CD8-positive, alpha-beta T cell (primary cell): ENCODE measurements at regions of chr14 and their contacts with region 1.

Region 1: DNA sequence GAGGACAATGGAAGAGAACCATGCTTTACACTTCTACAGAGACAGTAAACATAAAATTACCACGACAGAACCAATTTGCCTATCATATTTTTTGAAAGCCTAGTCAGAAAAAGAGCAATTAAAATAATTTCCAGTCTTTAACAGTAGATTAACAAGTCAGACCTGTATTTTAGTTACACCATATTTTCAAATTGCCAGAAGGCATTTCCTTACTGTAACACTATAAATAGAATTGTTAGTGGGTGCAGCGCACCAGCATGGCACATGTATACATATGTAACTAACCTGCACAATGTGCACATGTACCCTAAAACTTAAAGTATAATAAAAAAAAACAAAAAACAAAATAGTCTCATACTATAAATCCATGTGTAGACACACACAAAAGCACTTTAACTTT is 16.0 kb downstream of the SOS2 start:
- DNase-seq: no peak
- ATAC-seq: no peak
- H3K4me3 ChIP-seq: no peak overlapping the region
- H3K4me3 Mint-ChIP-seq: no peak overlapping the region
- H3K27ac ChIP-seq: no peak overlapping the region
- H3K27ac Mint-ChIP-seq: no peak overlapping the region
- H3K4me1 ChIP-seq: no peaks in the 10 kb centered on the region
- H3K4me1 Mint-ChIP-seq: peaks cover 32% of the 10 kb centered on the region
- H3K27me3 ChIP-seq: no peaks in the 10 kb centered on the region
- H3K27me3 Mint-ChIP-seq: no peaks in the 10 kb centered on the region
- CTCF ChIP-seq: no peak

Region 2: GRCh38 chr14:50897658-50898175 is 682.3 kb after region 1 on chr14:
- CTCF ChIA-PET with region 1: no interaction called
- POLR2A ChIA-PET with region 1: no interaction called
- intact Hi-C with region 1: loop called in 1 of 2 experiments (anchors 5 kb)
- DNase-seq: no peak
- ATAC-seq: no peak
- H3K4me3 ChIP-seq: no peak overlapping the region
- H3K4me3 Mint-ChIP-seq: no peak overlapping the region
- H3K27ac ChIP-seq: no peak overlapping the region
- H3K27ac Mint-ChIP-seq: no peak overlapping the region
- H3K4me1 ChIP-seq: no peaks in the 10 kb centered on the region
- H3K4me1 Mint-ChIP-seq: no peaks in the 10 kb centered on the region
- H3K27me3 ChIP-seq: peaks cover 0 to 2% of the 10 kb centered on the region in 2 experiments
- H3K27me3 Mint-ChIP-seq: peaks cover 17% of the 10 kb centered on the region
- CTCF ChIP-seq: no peak